Activated naive CD4-positive, alpha-beta T cell treated with anti-CD3 and anti-CD28 coated beads for 36 hours (primary cell): ENCODE measurements at regions of chr16 and their contacts with region 1.

Region 1: GRCh38 chr16:106623-107324 is 28.7 kb downstream of the MPG start:
- DNase-seq: peak; percentile 60
- H3K4me3 Mint-ChIP-seq: no peak overlapping the region
- H3K27ac Mint-ChIP-seq: no peak overlapping the region
- H3K4me1 Mint-ChIP-seq: no peaks in the 10 kb centered on the region
- H3K27me3 Mint-ChIP-seq: no peaks in the 10 kb centered on the region

Region 2: DNA sequence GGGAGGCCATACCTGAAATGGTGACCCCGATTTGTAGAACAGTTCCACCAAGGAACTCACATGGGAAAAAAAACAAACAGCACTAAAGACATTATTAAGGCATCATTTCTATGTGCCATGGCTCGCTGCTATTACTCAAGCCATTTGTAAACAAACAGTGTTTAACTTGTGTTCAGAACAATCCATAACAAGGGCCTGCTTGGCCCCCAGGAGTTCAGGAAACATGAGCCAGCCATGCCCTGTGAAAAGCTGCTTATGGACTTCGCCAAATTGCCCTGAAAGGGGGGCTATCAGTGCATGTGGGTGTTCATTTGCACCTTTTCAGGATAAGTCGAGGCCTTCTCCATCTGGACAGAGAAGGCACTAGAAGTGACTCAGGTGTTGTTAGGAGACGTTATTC is 61.3 kb before region 1 on chr16:
- CTCF ChIA-PET with region 1: no interaction called
- intact Hi-C with region 1: no loop called
- DNase-seq: no peak
- H3K4me3 Mint-ChIP-seq: no peak overlapping the region
- H3K27ac Mint-ChIP-seq: no peak overlapping the region
- H3K4me1 Mint-ChIP-seq: peaks cover 28% of the 10 kb centered on the region
- H3K27me3 Mint-ChIP-seq: no peaks in the 10 kb centered on the region

Region 3: GRCh38 chr16:117379-118365 is 10.9 kb after region 1 on chr16:
- CTCF ChIA-PET with region 1: interaction called, 17 read pairs
- intact Hi-C with region 1: no loop called
- DNase-seq: peak; percentile 58
- H3K4me3 Mint-ChIP-seq: no peak overlapping the region
- H3K27ac Mint-ChIP-seq: no peak overlapping the region
- H3K4me1 Mint-ChIP-seq: peaks cover 6% of the 10 kb centered on the region
- H3K27me3 Mint-ChIP-seq: no peaks in the 10 kb centered on the region